Posterior vena cava (tissue), 2 donors: ENCODE measurements at regions of chr9 and their contacts with region 1.

Region 1: DNA sequence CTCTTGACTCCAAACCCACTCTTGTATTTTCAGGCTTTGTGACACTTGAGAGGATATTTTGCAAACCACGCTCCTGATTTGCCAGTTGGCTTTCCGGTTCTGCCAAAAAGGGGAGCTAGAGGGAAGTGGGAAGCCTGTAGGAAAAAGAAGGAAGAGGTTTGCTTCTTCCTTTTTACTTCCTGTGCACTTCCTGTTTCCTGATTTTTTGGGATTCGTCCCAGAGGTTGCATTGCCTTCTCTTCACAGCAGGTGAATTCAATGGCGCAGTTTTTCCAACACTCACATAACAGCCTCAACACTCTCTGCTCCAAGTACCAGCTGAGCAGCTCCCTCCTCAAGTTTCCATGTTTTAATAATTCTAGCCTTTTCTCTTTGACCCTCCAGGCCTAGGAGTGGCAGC is 47.7 kb downstream of the SLC24A2 start:
- DNase-seq: no peak

Region 2: GRCh38 chr9:19809401-19810269 is 68.5 kb after region 1 on chr9:
- intact Hi-C with region 1: loop called in 1 of 2 experiments (anchors 2 kb)
- DNase-seq: no peak